ENCODE measurements at regions of chr5 and their contacts with region 1.

Region 1: DNA sequence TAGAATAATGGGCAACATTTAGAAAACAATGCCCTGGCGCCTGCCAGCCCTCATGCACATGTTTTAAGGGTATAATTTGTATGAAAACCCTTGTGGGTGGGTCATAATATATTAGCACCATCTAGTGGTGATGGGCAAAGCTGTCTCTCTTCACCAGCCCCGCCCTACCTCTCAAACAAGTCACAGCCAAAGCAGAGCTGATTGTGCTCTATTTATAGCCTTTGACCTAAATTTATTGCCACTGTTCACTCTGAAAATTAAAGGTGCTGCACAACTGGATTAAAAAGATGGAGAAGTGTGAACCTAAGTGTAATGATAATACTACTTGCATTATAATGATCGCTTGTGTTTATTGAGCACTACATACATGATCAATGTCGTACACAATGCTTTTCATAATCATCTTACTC is 131.9 kb upstream of the ANKH start:
- DNase-seq: peak; percentile 51 to 73
- H3K4me3 ChIP-seq: no peak overlapping the region
- H3K27ac ChIP-seq: no peak overlapping the region
- H3K4me1 ChIP-seq: peaks cover 7% of the 10 kb centered on the region
- H3K27me3 ChIP-seq: peaks cover 2% of the 10 kb centered on the region; the same call in 1 of the 2 replicates
- CTCF ChIP-seq: peak; percentile 83

Region 2: DNA sequence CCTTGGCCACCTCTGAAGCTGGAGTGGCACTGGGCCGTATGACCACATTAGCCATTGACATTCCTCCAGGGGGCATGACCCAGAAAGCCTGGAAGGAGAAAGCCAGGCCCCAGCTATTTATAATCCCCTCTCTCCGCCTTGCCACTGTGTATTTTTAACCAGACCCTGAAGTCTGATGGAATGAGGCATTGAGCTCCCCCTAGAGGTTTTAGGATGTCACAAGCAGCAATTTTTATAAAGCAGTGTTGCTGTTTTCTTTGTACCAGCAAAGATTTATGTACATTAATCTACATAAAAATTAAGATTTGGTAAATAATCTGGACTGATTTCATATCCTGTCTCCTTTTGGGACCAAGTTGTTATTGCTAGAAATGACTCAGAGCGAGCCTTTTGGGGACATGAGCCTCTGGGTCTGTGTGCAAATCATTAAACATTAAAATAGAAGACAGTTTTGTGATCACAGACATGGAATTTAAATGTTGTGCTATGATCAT is 733.3 kb before region 1 on chr5:
- CTCF ChIA-PET with region 1: interaction called, 12 read pairs
- POLR2A ChIA-PET with region 1: no interaction called
- intact Hi-C with region 1: no loop called
- DNase-seq: peak; percentile 81 to 86
- H3K4me3 ChIP-seq: 0 out of 2 replicates have a peak overlapping the region, but pooled peaks have one; percentile 8
- H3K27ac ChIP-seq: peak overlapping the region; percentile 88
- H3K4me1 ChIP-seq: peaks cover 57% of the 10 kb centered on the region
- H3K27me3 ChIP-seq: no peaks in the 10 kb centered on the region
- CTCF ChIP-seq: peak; percentile 90

Region 3: DNA sequence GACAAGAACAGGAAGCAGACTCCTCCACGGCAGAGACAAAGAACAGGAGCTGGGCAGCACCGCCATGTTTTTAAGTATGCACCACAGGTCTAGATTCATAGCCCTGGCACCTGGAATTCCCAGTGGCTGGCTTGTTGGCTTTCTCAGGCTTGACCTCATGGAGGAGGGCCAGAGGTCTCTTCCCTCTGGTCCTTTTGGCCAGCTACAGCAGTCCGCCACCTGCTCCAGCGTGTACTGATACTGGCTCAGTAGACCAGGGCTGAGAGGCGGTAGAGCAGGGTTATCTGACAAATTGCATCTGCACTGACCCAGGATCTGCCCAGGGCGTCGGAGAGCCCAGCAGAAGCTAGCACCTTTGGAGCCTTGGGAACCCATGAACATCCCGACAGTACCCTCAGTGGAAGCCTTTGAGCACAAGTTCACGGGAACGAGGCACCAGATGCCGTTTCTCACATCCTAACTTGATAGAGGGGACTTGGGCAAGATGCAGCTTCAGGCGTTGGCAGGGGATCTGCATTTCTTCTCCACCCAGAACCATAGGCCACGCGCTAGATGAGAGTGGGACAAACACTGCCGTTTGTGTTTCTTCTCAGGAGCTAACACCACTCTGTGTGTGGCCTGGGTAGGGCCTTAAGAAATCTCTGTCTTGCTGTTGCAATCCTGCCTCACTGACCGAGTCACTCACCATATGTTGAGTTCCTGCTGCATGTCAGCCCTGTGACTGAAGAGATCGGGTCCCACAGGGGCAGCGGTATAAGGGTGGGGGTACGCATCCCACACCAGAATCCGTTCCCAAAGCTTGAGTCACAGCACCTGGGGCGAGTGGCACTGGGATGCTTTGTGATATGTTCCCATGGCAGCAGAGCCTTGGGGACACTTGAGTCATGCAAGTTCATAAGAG is 512.3 kb before region 1 on chr5:
- CTCF ChIA-PET with region 1: no interaction called
- POLR2A ChIA-PET with region 1: no interaction called
- intact Hi-C with region 1: loop called (anchors 2 kb)
- DNase-seq: peak; percentile 60 to 92
- H3K4me3 ChIP-seq: no peak overlapping the region
- H3K27ac ChIP-seq: no peak overlapping the region
- H3K4me1 ChIP-seq: no peaks in the 10 kb centered on the region
- H3K27me3 ChIP-seq: no peaks in the 10 kb centered on the region
- CTCF ChIP-seq: no peak

Region 4: DNA sequence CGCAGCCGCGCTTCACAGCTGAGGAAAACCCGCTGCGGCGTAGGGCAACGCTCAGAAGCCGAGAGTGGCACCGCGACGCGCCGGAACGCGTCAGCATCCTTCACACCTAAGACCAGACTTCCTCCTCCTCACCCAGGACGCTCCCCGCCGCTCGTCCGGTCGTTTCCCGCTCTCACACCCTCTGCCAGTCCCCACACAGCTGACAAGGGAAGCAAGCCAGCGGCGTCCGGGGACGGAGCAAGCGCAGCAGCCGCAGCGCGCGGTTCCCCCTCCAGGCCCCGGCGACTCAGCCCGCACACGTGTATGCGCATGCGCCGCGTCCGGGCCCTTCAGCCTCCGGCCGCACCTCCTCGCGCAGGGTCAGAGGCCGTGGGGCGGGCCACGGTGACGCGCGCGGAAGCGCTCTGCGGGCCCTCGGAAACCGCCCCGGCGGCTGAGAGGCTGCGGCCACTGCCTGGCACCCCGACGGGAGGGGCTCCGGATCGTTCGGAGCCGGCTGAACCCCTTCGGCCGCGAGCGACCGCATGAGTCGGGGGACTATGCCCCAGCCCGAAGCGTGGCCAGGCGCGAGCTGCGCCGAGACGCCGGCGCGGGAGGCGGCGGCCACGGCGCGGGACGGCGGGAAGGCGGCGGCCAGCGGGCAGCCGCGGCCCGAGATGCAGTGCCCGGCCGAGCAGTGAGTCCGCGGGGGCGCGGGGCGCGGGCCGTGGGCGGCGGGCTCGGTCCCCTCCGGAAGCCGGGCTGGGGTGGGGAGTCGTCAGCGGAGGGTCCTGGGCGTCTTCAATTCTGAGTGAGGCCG is 339.0 kb before region 1 on chr5 and contains the start of gene OTULIN:
- CTCF ChIA-PET with region 1: no interaction called
- POLR2A ChIA-PET with region 1: no interaction called
- intact Hi-C with region 1: loop called (anchors 1 kb)
- DNase-seq: peak; percentile 71 to 98
- H3K4me3 ChIP-seq: peak within 1 kb of the TSS; percentile 73
- H3K27ac ChIP-seq: peak within 1 kb of the TSS; percentile 21
- H3K4me1 ChIP-seq: peaks cover 28% of the 10 kb centered on the region
- H3K27me3 ChIP-seq: no peaks in the 10 kb centered on the region
- CTCF ChIP-seq: no peak
- total RNA-seq, gene OTULIN: 77.2 and 79.1 TPM in 2 replicates

Region 5: GRCh38 chr5:14727428-14727865 is 276.1 kb before region 1 on chr5:
- CTCF ChIA-PET with region 1: interaction called, 42 read pairs
- POLR2A ChIA-PET with region 1: no interaction called
- intact Hi-C with region 1: loop called (anchors 1 kb)
- DNase-seq: peak; percentile 54 to 91
- H3K4me3 ChIP-seq: no peak overlapping the region
- H3K27ac ChIP-seq: no peak overlapping the region
- H3K4me1 ChIP-seq: no peaks in the 10 kb centered on the region
- H3K27me3 ChIP-seq: peaks cover 22% of the 10 kb centered on the region; the same call in 1 of the 2 replicates
- CTCF ChIP-seq: peak; percentile 97

Region 6: DNA sequence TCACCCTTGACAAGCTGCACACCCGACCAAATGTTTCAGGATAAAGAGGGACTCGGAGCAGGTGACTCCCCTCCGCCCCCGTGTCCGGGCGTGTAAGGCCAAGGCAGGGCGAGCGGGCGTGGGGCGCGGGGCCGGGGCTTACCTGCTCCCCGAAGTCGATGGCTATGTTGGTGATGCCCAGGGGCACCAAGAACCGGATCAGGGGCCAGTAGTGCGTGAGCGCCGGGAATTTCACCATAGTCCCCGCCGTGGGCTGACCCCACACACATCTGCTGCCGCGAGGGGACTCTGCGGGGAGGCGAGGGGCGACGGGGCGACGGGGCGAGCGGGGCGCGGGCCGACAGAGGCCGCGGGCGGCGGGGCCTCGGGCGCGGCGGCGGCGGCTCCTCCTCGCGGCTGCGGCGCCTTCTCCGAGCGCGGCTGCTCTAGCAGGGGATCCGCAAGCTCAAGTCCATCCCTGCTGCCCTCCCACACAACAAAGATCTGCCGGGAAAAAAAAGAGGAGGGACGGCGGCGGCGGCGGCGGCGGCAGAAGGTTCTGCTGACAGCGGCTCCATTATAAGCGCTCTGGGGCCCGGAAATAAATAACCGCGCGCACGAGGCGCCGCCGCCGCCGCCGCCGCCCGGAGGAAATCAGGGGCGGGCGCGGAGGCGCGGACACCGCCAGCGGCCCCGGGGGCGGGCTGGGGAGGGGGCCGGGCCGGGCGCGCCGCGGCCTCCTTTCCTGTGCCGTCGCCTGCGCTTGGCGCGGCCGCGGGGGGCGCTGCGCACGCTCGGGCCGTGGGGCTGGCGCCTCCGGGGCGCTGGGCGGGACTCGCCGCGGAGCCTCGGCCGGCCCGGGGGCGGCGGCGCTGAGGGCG is 132.1 kb before region 1 on chr5 and contains the start of gene ANKH:
- CTCF ChIA-PET with region 1: interaction called, 3 read pairs
- POLR2A ChIA-PET with region 1: no interaction called
- intact Hi-C with region 1: loop called (anchors 1 kb)
- DNase-seq: peak; percentile 41 to 96
- H3K4me3 ChIP-seq: peak within 1 kb of the TSS; percentile 60
- H3K27ac ChIP-seq: no peak within 1 kb of the TSS
- H3K4me1 ChIP-seq: peaks cover 7% of the 10 kb centered on the region; the same call in 1 of the 2 replicates
- H3K27me3 ChIP-seq: no peaks in the 10 kb centered on the region
- CTCF ChIP-seq: no peak
- total RNA-seq, gene ANKH: 81.4 and 87.2 TPM in 2 replicates

Region 7: DNA sequence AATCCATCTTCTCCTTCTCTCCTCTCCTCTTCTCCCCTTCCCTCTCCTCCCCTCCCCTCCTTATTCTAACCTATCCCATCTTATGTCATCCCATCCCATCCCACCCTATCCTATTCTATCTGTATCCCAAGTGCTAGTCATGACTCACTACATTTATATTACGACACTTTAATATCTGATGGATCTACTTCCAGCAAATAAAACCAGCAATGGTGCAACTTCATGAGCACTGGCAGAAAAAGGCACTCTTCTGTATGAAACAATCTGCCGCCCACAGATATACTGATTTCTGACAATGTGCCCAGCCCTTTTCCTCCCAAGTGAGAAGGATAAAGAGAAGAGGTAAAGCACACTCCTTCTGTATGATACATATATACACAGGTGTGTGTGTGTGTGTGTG is 45.3 kb before region 1 on chr5:
- CTCF ChIA-PET with region 1: interaction called, 3 read pairs
- POLR2A ChIA-PET with region 1: no interaction called
- intact Hi-C with region 1: loop called (anchors 1 kb)
- DNase-seq: no peak
- H3K4me3 ChIP-seq: no peak overlapping the region
- H3K27ac ChIP-seq: no peak overlapping the region
- H3K4me1 ChIP-seq: peaks cover 8% of the 10 kb centered on the region; the same call in 1 of the 2 replicates
- H3K27me3 ChIP-seq: peaks cover 4% of the 10 kb centered on the region
- CTCF ChIP-seq: no peak

Region 8: DNA sequence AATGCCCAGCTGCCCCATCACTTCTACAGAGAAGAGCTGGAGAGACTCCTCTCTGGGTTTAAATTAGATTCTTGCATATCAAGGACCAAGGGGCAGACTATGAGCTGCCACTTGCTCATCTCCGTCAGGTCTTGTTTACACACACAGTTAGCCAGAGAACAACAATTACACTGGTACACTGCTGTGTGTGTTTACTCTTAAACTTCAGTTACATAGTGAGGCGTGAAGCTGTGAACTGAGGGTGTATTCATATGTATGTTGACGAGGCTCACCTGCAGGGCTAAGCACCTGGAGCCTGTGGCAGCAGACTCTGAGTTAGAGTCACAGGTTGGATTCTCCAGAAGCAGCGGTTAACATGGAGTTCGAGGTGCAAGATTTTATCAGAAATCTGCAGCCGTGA is 23.4 kb after region 1 on chr5:
- CTCF ChIA-PET with region 1: no interaction called
- POLR2A ChIA-PET with region 1: no interaction called
- intact Hi-C with region 1: no loop called
- DNase-seq: no peak
- H3K4me3 ChIP-seq: no peak overlapping the region
- H3K27ac ChIP-seq: no peak overlapping the region
- H3K4me1 ChIP-seq: no peaks in the 10 kb centered on the region
- H3K27me3 ChIP-seq: no peaks in the 10 kb centered on the region
- CTCF ChIP-seq: no peak

Measured in PC-9 (cell line).